ENCODE measurements at regions of chr3 and their contacts with region 1.

Region 1: DNA sequence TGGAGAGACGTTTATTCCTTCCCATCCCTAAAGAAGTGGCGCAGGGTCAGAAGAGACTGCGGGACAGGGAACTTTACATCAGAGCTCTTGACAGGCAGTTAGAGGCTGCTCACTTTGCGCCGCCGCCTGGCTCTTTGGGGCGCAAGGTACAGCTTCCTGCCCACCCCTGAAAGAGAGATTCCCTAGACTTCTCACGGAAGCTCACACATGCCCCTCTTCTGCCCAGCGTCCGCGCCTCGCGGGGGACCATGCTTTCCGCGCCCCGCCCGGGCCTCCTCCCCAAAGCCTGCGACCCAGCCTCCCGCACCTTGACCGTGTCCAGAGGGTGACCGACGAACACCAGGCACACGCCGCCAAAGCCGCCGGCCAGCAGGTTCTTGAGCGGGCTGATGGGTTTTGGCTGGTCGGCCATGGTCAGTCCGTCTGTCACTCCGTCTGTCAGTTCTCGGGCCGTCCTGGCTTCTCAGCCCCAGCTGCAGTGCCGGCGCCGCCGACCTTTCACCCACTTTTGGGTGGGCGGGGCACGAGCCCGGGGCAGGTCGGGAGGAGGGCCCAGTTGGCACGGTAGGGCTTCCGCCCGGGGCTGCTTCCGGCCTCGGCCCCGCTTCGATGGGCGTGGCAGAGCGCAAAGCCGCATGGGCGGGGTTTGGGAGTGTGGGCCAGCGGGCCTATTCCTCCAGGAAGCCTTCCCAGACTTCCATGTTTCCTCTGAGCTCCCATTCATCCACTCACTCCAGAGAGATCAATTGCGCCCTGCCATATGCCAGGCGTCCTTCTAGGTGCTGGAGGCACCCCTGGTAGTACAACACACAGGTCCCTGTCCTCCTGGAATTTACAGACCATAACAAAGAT is at the start of gene SLC25A20:
- DNase-seq: peak; percentile 98
- H3K4me3 Mint-ChIP-seq: peak within 1 kb of the TSS; percentile 90
- H3K27ac Mint-ChIP-seq: peak within 1 kb of the TSS; percentile 91
- H3K4me1 Mint-ChIP-seq: peaks cover 31% of the 10 kb centered on the region
- H3K27me3 Mint-ChIP-seq: no peaks in the 10 kb centered on the region
- total RNA-seq, gene SLC25A20: 13.8 and 15.6 TPM in 2 replicates

Region 2: DNA sequence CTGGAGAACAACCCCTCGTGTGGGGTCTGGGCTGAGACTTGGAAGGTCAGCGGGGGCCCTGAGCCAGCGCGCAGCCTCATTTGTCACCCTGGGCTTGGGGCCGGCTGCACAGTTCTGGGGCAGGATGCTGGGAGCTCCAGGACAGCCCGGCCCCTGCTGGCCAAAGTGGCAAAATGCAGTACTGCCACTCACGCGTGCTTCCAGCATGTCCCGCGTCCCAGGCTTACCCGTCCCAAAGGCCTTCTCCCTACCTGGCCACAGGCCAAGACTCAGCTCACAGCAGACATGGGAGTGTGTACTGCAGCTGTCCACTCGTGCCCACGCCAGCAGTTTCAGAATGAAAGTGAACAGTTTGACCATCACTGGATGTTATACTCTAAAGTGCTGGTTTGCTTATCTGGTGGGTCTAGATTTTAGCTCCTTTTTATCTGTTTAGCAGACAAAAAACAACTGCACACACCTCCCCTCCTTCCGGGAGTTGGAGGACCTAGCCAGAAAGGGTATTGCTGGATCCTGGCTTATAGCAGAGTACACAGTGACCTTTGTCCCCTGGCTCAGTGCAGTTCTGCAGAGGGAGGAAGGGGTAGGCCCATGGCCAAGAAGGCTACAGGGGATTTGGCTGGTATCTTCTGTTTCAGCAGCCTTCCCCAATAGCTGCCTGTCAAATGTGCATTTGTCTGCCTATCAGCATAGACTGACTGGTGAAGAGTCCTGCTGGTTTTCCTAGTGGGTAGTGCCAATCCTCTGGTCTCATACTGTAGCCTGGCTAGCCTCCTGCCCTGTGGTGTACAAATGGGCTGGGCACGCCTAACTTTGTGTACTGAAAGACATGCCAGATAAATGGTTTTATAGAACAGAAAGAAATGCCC is 158.4 kb before region 1 on chr3:
- intact Hi-C with region 1: no loop called
- DNase-seq: peak; percentile 86
- H3K4me3 Mint-ChIP-seq: no peak overlapping the region
- H3K27ac Mint-ChIP-seq: peak overlapping the region; percentile 45
- H3K4me1 Mint-ChIP-seq: no peaks in the 10 kb centered on the region
- H3K27me3 Mint-ChIP-seq: no peaks in the 10 kb centered on the region

Region 3: GRCh38 chr3:48847504-48848423 is 50.8 kb before region 1 on chr3 and contains the start of gene PRKAR2A:
- intact Hi-C with region 1: loop called (anchors 5 kb)
- DNase-seq: peak; percentile 95
- H3K4me3 Mint-ChIP-seq: peak within 1 kb of the TSS; percentile 85
- H3K27ac Mint-ChIP-seq: peak within 1 kb of the TSS; percentile 90
- H3K4me1 Mint-ChIP-seq: peaks cover 19% of the 10 kb centered on the region
- H3K27me3 Mint-ChIP-seq: no peaks in the 10 kb centered on the region
- total RNA-seq, gene PRKAR2A: 31.9 and 39.4 TPM in 2 replicates

Region 4: DNA sequence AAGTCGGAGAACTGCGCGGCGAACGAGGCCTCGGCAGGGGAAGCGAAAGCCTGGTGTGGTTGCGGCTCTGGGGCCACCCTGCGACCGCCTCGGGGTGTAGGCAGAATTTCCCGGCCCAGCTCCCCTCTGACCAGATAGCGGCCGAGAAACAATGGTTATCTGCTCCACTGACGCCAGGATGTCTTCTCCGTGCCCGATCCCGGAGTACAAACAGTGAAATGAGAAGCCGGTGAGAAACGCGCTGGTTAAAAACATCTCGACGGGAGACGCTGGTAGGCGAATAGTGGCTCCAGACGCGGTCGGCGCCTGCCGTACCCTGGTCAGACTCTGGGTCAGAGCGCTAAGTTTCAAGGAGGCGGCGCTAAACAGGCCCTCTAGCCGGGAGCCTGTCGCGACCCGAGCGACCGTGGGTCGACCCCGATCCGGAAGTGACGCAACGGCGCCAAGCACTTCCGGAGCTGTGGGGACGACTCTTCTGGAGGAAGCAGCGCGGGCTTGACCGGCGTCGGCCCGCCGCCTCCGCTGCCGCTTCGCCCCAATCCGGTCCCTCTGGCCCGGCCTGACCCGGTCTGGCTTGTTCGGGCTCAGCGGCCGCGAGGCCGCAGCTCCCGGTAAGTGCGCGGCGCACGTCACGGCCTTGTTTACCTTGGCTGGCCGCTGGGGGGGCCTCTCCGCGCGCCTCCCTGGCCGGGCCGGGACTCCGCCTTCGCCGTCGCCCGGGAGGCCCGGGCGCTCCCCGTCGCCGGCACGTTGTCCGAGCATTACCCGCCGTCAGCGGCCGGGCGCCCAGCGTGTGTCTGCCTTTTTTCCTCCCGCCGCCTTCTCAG is 20.0 kb after region 1 on chr3 and contains the start of gene ARIH2:
- intact Hi-C with region 1: loop called (anchors 1 kb)
- DNase-seq: peak; percentile 97
- H3K4me3 Mint-ChIP-seq: peak within 1 kb of the TSS; percentile 91
- H3K27ac Mint-ChIP-seq: peak within 1 kb of the TSS; percentile 97
- H3K4me1 Mint-ChIP-seq: peaks cover 22% of the 10 kb centered on the region
- H3K27me3 Mint-ChIP-seq: no peaks in the 10 kb centered on the region
- total RNA-seq, gene ARIH2: 157 TPM in 2 replicates

Region 5: GRCh38 chr3:48927928-48928327 is 29.3 kb after region 1 on chr3:
- intact Hi-C with region 1: loop called (anchors 5 kb)
- DNase-seq: no peak
- H3K4me3 Mint-ChIP-seq: peak overlapping the region; percentile 46
- H3K27ac Mint-ChIP-seq: peak overlapping the region; percentile 56
- H3K4me1 Mint-ChIP-seq: peaks cover 53% of the 10 kb centered on the region
- H3K27me3 Mint-ChIP-seq: no peaks in the 10 kb centered on the region

Measured in activated CD4-positive, alpha-beta T cell treated with anti-CD3 and anti-CD28 coated beads, Interleukin-2, amount 10 ng/mL, durations not matched to agents 24 days and 14 days (primary cell).